Activated T-helper 2 cell treated with anti-CD3 and anti-CD28 coated beads, Interferon-gamma antibody, Interleukin-2, Interleukin-4, amounts not matched to agents 10 μg/mL and 5 μg/mL and 100 μg/mL, durations not matched to agents 14 hours and 24 hours and 36 hours (primary cell): ENCODE measurements at regions of chr11 and their contacts with region 1.

Region 1: DNA sequence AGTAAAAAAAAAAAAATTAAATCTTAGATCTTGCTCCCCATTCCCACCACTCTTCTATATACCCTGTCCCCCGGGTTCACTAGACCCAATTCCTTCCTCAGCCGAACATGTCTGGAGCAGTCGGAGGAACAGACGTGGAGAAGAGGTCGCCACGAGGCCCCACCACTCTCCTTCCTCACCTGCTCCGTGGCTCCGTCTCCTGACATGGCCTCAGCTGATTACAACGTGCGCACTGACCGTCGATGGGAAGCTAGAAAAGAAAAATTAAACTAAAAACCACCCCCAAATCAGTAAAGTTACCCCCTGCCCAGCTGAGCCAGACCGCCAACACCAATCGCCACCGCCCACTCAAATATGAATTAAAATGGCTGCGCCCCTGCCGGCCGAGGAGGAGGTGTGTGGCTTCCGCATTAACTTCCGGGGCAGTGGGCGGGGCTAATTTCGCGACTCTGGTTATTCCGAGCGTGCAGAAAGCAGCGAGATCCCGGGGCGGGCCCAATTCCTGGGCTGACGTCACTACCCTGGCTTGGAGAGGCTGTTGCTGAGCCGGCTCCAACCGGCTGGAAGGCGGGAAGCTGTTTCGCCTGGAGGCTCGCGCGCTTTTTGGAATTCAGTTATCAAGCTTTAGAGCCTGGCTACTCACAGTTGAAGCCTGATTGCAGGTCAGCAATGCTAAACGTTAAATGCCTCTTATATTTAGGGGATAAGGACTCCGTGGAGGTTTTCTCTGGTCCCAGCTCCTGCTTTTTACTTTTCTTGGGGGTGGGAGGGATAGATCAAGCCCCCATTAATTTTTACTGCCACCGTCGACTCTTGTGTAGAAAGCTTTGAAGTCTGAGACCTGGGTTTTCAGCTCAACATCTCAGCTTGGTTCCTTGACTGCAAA is at the start of gene CSTF3:
- DNase-seq: peak; percentile 91
- H3K4me3 Mint-ChIP-seq: peak within 1 kb of the TSS; percentile 100
- H3K27ac Mint-ChIP-seq: peak within 1 kb of the TSS; percentile 100
- H3K4me1 Mint-ChIP-seq: peaks cover 35% of the 10 kb centered on the region
- H3K27me3 Mint-ChIP-seq: no peaks in the 10 kb centered on the region
- total RNA-seq, gene CSTF3: 34.1 and 38.6 TPM in 2 replicates

Region 2: GRCh38 chr11:32852207-32852606 is 309.2 kb before region 1 on chr11:
- intact Hi-C with region 1: no loop called
- DNase-seq: no peak
- H3K4me3 Mint-ChIP-seq: no peak overlapping the region
- H3K27ac Mint-ChIP-seq: no peak overlapping the region
- H3K4me1 Mint-ChIP-seq: peaks cover 6% of the 10 kb centered on the region
- H3K27me3 Mint-ChIP-seq: peaks cover 5% of the 10 kb centered on the region

Region 3: GRCh38 chr11:32893343-32894148 is 267.8 kb before region 1 on chr11:
- intact Hi-C with region 1: loop called (anchors 2 kb)
- DNase-seq: peak; percentile 23
- H3K4me3 Mint-ChIP-seq: peak overlapping the region; percentile 98
- H3K27ac Mint-ChIP-seq: peak overlapping the region; percentile 95
- H3K4me1 Mint-ChIP-seq: peaks cover 27% of the 10 kb centered on the region
- H3K27me3 Mint-ChIP-seq: peaks cover 8% of the 10 kb centered on the region

Region 4: DNA sequence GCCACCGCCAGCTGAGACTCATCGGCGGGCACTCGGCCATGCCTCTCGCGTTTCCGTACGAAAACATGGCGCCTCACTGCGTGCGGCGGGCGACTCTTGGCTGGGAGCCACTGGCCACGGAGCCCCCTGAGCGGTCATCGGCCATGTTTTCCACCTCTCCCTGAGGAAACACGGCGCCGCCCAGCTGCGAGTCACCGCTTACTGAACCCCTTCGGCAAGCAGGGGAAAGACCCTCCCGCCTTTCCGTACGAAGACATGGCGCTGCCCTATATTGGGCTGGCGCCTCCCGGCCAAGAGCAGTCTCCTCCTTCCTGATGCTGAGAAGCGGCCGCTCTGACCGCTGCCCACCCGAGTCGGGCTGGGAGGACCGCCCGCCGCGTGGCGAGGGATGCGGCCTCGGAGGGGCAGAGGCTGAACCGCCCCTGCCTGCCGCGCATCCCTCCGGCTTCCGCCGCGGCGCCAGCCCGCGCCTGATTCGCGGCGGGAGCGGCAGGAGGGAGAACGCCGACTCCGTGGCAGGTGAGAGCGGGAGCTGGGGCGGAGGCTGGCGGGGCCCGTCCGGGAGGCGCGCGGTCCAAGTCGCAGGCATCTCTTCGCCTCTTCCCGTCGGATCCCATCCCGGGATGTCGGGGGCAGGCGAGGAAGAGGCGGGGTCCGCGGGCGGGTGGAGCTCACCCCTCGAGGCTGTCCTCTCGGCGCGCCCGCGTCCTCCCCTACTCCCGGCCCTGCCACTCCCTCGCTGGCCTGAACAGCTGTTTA is 121.9 kb before region 1 on chr11 and contains the start of gene TCP11L1:
- intact Hi-C with region 1: loop called (anchors 1 kb)
- DNase-seq: peak; percentile 74
- H3K4me3 Mint-ChIP-seq: peak within 1 kb of the TSS; percentile 91
- H3K27ac Mint-ChIP-seq: peak within 1 kb of the TSS; percentile 93
- H3K4me1 Mint-ChIP-seq: peaks cover 36% of the 10 kb centered on the region
- H3K27me3 Mint-ChIP-seq: peaks cover 18% of the 10 kb centered on the region
- total RNA-seq, gene TCP11L1: 12.4 and 13.8 TPM in 2 replicates

Region 5: DNA sequence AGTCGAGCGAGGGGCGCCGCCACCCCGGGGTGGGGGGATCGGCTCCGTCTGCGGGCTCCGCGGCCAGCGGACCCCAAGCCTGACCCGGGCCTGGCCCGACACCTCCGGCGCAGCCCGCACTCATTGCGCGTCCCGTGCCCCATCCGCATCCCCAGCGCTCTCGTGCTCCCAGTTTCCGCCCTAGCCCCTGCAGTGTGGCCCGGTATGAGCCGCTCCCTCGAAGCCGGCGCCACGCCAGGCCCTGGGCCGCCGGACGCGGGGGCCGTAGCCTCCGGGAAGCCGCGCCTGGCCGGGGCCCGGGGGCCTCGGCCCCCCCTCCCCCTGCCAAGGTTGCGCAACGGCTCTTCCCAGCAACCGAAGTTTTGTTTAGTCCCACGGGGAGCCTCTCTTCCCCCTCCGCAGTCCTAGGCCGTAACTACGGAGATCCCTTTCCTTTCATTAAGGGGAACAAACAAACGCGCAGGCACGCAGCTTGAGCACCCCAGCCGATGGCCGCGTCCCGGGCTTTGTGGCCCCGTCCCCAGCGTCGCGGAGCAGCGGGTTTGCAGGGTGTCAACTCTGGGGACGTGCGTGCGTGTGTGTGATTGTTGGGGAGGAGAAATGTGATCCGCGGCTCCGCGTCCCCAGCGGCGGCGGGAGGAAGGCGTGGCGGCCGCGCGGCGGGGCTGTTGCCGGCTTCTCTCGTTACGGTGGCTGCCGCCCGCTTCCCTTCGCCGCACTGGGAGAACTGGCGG is 96.7 kb after region 1 on chr11:
- intact Hi-C with region 1: loop called (anchors 1 kb)
- DNase-seq: peak; percentile 75
- H3K4me3 Mint-ChIP-seq: peak overlapping the region; percentile 86
- H3K27ac Mint-ChIP-seq: peak overlapping the region; percentile 99
- H3K4me1 Mint-ChIP-seq: peaks cover 32% of the 10 kb centered on the region
- H3K27me3 Mint-ChIP-seq: no peaks in the 10 kb centered on the region

Region 6: DNA sequence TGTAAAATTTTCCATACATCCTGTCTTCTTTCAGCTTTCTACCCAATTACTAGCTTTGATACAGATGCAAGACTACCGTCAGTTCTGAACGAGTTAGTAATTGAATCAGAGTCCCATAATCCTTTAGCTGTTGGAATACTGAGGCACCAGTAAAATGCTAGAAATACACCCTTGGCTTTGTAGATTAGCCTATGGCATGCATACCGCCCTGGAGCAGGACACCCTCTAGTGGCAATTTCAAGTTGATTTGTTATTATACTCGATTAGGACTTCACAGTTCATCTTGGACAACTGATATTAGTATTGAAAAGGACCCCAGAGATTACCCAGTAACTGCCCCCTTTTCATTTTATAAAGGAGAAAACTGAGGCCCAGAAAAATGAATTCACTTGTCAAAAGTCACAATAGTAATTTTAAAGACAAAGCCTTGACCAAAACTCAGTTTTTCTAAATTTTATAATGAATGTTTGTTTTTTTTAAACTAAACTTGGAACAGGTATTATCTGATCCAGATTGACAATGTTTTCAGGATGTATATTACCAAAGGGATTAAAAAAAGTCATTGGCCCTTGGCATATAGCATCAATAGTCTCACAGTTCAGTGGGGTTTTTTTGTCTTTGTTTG is 168.5 kb after region 1 on chr11:
- intact Hi-C with region 1: loop called (anchors 1 kb)
- DNase-seq: no peak
- H3K4me3 Mint-ChIP-seq: no peak overlapping the region
- H3K27ac Mint-ChIP-seq: no peak overlapping the region
- H3K4me1 Mint-ChIP-seq: peaks cover 7% of the 10 kb centered on the region
- H3K27me3 Mint-ChIP-seq: no peaks in the 10 kb centered on the region

Region 7: DNA sequence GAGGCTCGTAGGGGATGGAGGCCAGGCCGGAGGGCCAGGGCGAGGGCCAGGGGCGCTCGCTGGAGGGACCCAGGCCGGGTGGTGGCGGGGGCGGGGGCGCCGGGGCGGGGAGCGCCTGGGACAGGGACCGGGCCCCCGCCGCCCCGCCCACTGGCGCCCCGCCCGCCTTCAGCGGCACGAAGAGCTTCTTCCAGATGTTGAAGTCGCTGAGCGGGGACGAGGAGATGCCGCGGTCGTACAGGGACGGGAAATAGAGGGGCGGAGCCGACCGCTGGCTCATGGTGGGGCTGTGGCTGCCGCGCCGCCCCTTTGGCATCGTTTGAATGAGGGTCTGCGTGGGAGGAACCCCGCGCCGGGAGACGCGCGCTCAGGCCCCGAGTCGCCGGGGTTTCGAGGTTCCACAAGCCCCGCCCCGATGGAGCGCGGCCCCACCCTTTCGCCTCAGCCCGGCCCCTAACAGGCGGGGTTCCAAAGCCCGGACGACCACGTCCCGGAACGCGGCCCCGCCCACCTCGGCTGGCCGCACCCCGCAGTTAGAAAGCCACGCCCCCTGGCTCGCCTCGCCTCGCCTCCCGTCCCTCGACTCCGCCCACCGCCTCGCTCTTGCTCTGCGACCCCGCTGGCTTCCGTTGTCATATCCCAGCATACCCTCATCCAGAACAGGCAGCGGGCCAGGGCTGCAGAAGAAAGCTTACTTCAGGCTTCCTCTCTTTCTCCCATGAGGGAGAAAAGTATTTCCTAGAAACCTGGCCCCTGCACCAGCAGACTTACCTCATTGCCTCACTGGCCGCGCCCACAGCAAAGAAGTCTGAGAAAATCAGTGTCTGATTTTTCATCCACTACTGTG is 539.3 kb after region 1 on chr11 and contains the start of gene C11orf91:
- intact Hi-C with region 1: loop called (anchors 10 kb)
- DNase-seq: peak; percentile 92
- H3K4me3 Mint-ChIP-seq: peak within 1 kb of the TSS; percentile 84
- H3K27ac Mint-ChIP-seq: peak within 1 kb of the TSS; percentile 14
- H3K4me1 Mint-ChIP-seq: peaks cover 14% of the 10 kb centered on the region
- H3K27me3 Mint-ChIP-seq: peaks cover 31% of the 10 kb centered on the region
- total RNA-seq, gene C11orf91: not detected in 2 replicates